CD4-positive, alpha-beta T cell (primary cell): ENCODE measurements at regions of chr18 and their contacts with region 1.

Region 1: DNA sequence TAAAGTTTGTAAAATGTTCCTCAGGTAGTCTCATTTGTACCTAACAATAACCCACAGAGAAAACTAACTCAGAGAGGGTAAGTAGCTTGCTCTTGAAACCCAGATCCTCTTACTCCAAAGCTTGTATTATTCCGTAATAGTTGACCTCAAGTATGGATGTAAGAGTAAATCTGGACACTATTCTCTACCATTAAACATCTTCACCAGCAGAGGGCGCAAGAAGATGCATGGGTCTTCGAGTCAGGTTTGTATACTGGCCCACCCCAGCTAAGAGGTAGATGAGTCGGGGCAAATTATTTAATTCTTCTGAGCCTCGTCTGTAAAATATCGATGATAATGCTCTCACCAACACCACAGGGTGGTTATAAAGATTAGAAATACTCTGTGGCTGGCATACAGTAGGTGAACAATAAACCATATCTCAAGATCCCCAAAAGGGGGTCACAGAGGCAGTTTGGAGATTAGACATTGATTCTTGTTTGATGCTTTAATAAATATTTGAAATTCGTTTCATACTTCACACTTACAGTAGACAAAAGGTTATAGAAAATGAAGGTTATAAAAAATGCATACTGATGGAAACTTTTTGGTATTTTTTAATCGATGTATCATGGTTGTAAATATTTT is 3.5 kb upstream of the CABLES1 start:
- DNase-seq: peak in 13 of 14 experiments; percentile 23 to 85 (median 51)
- ATAC-seq: peak; percentile 46
- H3K4me3 ChIP-seq: no peak overlapping the region
- H3K4me3 Mint-ChIP-seq: peak overlapping the region; percentile 0
- H3K27ac ChIP-seq: no peak overlapping the region
- H3K27ac Mint-ChIP-seq: no peak overlapping the region
- H3K4me1 ChIP-seq: peaks cover 17% of the 10 kb centered on the region
- H3K4me1 Mint-ChIP-seq: peaks cover 18% of the 10 kb centered on the region
- H3K27me3 ChIP-seq: peaks cover 24 to 26% of the 10 kb centered on the region in 2 experiments
- H3K27me3 Mint-ChIP-seq: peaks cover 36% of the 10 kb centered on the region
- CTCF ChIP-seq: peak; percentile 96

Region 2: GRCh38 chr18:22933206-22933957 is 198.4 kb before region 1 on chr18 and contains the start of gene RBBP8:
- CTCF ChIA-PET with region 1: interaction called, 3 read pairs
- POLR2A ChIA-PET with region 1: no interaction called
- intact Hi-C with region 1: loop called in 1 of 2 experiments (anchors 5 kb)
- DNase-seq: peak; percentile 55 to 90 (median 74)
- ATAC-seq: peak; percentile 67
- H3K4me3 ChIP-seq: peak within 1 kb of the TSS; percentile 97
- H3K4me3 Mint-ChIP-seq: peak within 1 kb of the TSS; percentile 89
- H3K27ac ChIP-seq: peak within 1 kb of the TSS; percentile 80 to 95
- H3K27ac Mint-ChIP-seq: peak within 1 kb of the TSS; percentile 67
- H3K4me1 ChIP-seq: peaks cover 8% of the 10 kb centered on the region
- H3K4me1 Mint-ChIP-seq: peaks cover 13% of the 10 kb centered on the region
- H3K27me3 ChIP-seq: no peaks in the 10 kb centered on the region
- H3K27me3 Mint-ChIP-seq: no peaks in the 10 kb centered on the region
- CTCF ChIP-seq: no peak
- total RNA-seq, gene RBBP8: 1.2 to 2.5 TPM

Region 3: GRCh38 chr18:23071285-23071684 is 60.5 kb before region 1 on chr18:
- CTCF ChIA-PET with region 1: interaction called, 5 read pairs
- POLR2A ChIA-PET with region 1: interaction called, 3 read pairs
- intact Hi-C with region 1: loop called (anchors 5 to 10 kb)
- DNase-seq: peak; percentile 65 to 98 (median 80)
- ATAC-seq: peak; percentile 95
- H3K4me3 ChIP-seq: peak overlapping the region; percentile 27
- H3K4me3 Mint-ChIP-seq: peak overlapping the region; percentile 84
- H3K27ac ChIP-seq: peak overlapping the region; percentile 11 to 23
- H3K27ac Mint-ChIP-seq: peak overlapping the region; percentile 79
- H3K4me1 ChIP-seq: peaks cover 65% of the 10 kb centered on the region
- H3K4me1 Mint-ChIP-seq: peaks cover 82% of the 10 kb centered on the region
- H3K27me3 ChIP-seq: no peaks in the 10 kb centered on the region
- H3K27me3 Mint-ChIP-seq: no peaks in the 10 kb centered on the region
- CTCF ChIP-seq: no peak

Region 4: DNA sequence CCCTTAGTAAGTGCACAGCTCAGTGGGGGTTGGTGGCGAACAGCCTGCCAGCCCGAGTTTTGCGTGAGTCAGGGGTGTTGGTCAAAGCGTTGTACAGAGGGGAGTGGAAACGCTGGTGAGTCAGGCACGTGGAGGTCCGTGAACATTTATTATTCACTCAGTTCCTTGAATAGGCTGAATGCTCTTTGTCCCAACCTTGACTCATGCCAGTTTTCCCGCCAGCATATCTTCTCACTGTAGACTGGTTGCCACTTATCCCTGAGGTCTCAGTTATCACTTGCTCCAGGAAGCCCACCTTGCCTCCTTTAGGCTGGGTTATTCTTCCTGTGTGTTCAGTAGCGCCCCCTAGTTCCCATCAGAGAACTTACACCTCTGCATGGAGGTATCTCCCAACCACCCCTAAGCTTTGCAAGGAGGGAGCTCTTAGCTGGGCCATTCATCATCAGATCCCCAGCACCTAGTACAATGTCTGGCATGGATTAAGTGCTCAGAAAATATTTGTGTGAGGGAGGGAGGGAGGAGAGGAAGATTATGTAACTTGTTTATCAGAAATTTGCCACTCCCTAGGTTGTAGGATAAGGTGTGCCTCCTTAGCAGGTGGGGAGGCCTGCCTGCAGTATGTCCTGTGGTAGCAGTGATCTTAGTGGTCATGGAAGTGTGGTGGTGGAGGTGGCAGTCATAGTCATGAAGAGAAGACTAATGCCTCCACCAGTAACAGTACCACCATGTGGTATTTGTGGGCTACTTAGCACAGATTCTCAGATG is 75.6 kb after region 1 on chr18:
- CTCF ChIA-PET with region 1: no interaction called
- POLR2A ChIA-PET with region 1: no interaction called
- intact Hi-C with region 1: no loop called
- DNase-seq: peak in 1 of 14 experiments; percentile 17
- ATAC-seq: no peak
- H3K4me3 ChIP-seq: no peak overlapping the region
- H3K4me3 Mint-ChIP-seq: no peak overlapping the region
- H3K27ac ChIP-seq: no peak overlapping the region
- H3K27ac Mint-ChIP-seq: no peak overlapping the region
- H3K4me1 ChIP-seq: peaks cover 5% of the 10 kb centered on the region
- H3K4me1 Mint-ChIP-seq: peaks cover 5% of the 10 kb centered on the region
- H3K27me3 ChIP-seq: no peaks in the 10 kb centered on the region
- H3K27me3 Mint-ChIP-seq: peaks cover 4% of the 10 kb centered on the region
- CTCF ChIP-seq: no peak

Region 5: GRCh38 chr18:23356915-23357601 is 225.3 kb after region 1 on chr18:
- CTCF ChIA-PET with region 1: interaction called, 8 read pairs
- POLR2A ChIA-PET with region 1: no interaction called
- intact Hi-C with region 1: loop called (anchors 1 kb)
- DNase-seq: no peak
- ATAC-seq: no peak
- H3K4me3 ChIP-seq: no peak overlapping the region
- H3K4me3 Mint-ChIP-seq: no peak overlapping the region
- H3K27ac ChIP-seq: no peak overlapping the region
- H3K27ac Mint-ChIP-seq: no peak overlapping the region
- H3K4me1 ChIP-seq: peaks cover 12% of the 10 kb centered on the region
- H3K4me1 Mint-ChIP-seq: peaks cover 16% of the 10 kb centered on the region
- H3K27me3 ChIP-seq: no peaks in the 10 kb centered on the region
- H3K27me3 Mint-ChIP-seq: no peaks in the 10 kb centered on the region
- CTCF ChIP-seq: no peak

Region 6: DNA sequence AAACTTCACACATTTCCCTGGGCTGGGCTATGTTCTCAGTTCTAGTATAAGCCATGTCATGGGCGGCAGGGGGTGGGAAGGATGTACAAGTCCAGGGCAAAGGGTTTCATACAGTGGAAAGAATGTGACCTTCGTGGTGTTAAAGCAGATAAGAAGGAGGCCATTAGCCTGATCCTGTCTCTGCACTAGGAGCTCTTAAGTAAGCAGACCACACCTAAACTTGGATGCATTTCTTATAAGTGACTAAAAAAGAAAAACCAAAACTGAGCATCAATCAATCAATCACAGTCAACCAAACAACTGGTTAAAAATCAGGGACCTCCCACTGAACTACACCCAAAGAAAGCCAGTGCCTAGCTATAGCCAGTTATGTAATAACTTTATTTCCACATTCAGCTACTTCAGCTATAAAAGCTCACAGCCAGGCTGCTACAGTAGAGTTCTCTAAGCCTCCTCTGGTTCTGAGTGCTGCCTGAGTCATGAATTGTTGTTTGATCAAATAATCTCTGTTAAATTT is 274.5 kb after region 1 on chr18:
- CTCF ChIA-PET with region 1: interaction called, 4 read pairs
- POLR2A ChIA-PET with region 1: no interaction called
- intact Hi-C with region 1: loop called in 1 of 2 experiments (anchors 1 kb)
- DNase-seq: no peak
- ATAC-seq: no peak
- H3K4me3 ChIP-seq: no peak overlapping the region
- H3K4me3 Mint-ChIP-seq: no peak overlapping the region
- H3K27ac ChIP-seq: no peak overlapping the region
- H3K27ac Mint-ChIP-seq: no peak overlapping the region
- H3K4me1 ChIP-seq: no peaks in the 10 kb centered on the region
- H3K4me1 Mint-ChIP-seq: no peaks in the 10 kb centered on the region
- H3K27me3 ChIP-seq: no peaks in the 10 kb centered on the region
- H3K27me3 Mint-ChIP-seq: no peaks in the 10 kb centered on the region
- CTCF ChIP-seq: no peak

Region 7: DNA sequence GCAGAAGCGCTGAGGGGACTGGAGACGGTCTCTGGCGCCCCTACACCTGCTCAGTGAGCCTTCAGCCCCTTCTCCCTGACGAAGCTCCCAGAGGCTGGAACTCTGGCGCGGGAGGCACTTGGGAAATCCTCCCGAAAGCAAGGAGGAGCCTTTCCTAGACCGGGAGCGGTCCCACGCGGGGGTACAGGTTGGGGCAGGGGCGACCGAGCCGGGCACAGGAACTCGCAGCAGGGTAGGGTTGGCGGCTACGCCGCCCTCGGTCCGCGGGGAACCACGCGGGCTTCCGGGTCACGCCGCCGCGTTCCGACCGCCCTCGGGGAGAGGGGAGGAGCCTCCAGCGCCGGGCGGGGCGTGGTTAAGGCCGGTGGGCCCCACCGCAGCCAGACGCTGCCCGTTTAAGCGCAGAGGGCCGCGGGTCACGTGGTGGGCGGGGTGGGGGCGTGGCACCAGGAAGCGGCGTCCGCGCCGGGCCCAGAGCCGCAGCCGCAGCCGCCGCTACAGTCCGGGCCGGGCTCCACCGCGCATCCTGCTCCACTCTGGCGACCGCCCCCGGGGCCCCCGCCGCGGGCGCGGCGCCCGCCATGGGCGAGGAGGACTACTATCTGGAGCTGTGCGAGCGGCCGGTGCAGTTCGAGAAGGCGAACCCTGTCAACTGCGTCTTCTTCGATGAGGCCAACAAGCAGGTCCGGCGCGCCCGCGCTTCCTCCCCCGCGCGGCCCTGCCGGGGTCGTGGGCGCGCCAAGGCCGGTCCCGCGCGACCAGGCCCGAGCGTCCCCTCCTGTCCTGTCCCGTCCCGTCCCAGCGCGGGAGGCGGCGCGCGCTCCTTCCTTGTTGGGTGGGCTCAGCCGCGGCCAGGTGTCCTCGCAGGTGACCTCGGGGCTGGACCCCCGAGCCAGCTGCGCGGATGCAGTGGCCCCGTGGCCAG is 371.5 kb after region 1 on chr18 and contains the start of gene RMC1:
- CTCF ChIA-PET with region 1: no interaction called
- POLR2A ChIA-PET with region 1: no interaction called
- intact Hi-C with region 1: loop called (anchors 5 to 10 kb)
- DNase-seq: peak; percentile 92 to 99 (median 97)
- ATAC-seq: peak; percentile 89
- H3K4me3 ChIP-seq: peak within 1 kb of the TSS; percentile 76
- H3K4me3 Mint-ChIP-seq: peak within 1 kb of the TSS; percentile 91
- H3K27ac ChIP-seq: peak within 1 kb of the TSS; percentile 86 to 89
- H3K27ac Mint-ChIP-seq: peak within 1 kb of the TSS; percentile 91
- H3K4me1 ChIP-seq: peaks cover 45% of the 10 kb centered on the region
- H3K4me1 Mint-ChIP-seq: peaks cover 51% of the 10 kb centered on the region
- H3K27me3 ChIP-seq: no peaks in the 10 kb centered on the region
- H3K27me3 Mint-ChIP-seq: no peaks in the 10 kb centered on the region
- CTCF ChIP-seq: no peak
- total RNA-seq, gene RMC1: 46.9 to 48.3 TPM